Endothelial cell of umbilical vein (primary cell): ENCODE measurements at regions of chr6 and their contacts with region 1.

Region 1: DNA sequence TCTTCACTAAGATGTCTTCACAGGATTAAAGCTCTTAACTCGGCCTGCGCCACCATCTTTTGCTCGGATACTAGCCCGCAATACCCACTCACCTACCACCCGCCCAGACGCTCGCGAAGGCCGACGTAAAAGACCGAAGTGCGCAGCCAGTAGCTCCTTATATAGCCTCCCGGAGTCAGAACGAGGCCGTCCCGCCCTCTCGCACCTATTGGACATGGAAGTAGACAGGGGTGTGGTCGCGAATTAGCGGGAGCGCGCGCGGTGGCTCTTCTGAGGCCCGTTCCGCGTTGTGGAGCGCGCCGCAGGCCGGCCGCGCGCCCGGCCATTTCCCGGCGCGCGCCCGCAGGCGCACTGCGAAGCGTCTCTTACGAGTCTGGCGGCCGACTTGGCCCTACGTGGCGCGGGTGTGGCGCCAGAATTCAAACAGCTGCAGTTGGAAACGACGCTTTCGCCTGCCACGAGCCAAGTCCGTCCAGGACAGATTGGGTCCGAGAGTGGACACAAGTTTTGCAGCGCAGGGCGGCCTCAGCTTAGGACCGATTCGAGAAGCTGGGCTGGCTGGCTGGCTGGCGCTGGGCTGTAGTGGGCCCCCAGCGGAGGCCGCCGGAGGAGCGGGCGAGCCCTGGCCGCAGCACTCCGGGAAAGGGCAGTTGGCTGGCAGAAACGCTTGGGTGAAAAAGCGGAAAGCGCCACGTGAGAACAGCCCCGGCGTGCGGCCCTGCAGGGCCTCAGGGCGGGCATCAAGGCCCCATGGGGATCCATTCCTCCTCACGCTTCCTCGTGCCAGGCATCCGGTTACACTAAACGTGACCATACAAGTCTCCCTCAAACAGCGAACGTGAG is 36.1 kb upstream of the SYNCRIP start:
- DNase-seq: peak; percentile 99
- H3K4me3 ChIP-seq: peak overlapping the region; percentile 87 to 99 (median 96)
- H3K27ac ChIP-seq: peak overlapping the region; percentile 72
- H3K4me1 ChIP-seq: peaks cover 29% of the 10 kb centered on the region
- H3K27me3 ChIP-seq: no peaks in the 10 kb centered on the region
- CTCF ChIP-seq: peak in 1 of 2 donors; percentile 9
- POLR2A ChIP-seq: peak; percentile 100

Region 2: GRCh38 chr6:85354761-85355618 is 323.8 kb before region 1 on chr6:
- CTCF ChIA-PET with region 1: no interaction called
- POLR2A ChIA-PET with region 1: interaction called, 4 read pairs
- dilution Hi-C with region 1: no loop called
- intact Hi-C with region 1: loop called (anchors 5 kb)
- DNase-seq: peak; percentile 78
- H3K4me3 ChIP-seq: no peak overlapping the region
- H3K27ac ChIP-seq: no peak overlapping the region
- H3K4me1 ChIP-seq: no peaks in the 10 kb centered on the region
- H3K27me3 ChIP-seq: no peaks in the 10 kb centered on the region
- CTCF ChIP-seq: peak; percentile 80 to 92
- POLR2A ChIP-seq: no peak

Region 3: GRCh38 chr6:85460921-85461797 is 217.7 kb before region 1 on chr6:
- CTCF ChIA-PET with region 1: no interaction called
- POLR2A ChIA-PET with region 1: interaction called, 6 read pairs
- dilution Hi-C with region 1: no loop called
- intact Hi-C with region 1: loop called (anchors 5 kb)
- DNase-seq: peak; percentile 61
- H3K4me3 ChIP-seq: peak overlapping the region in 1 of 3 experiments; percentile 8
- H3K27ac ChIP-seq: peak overlapping the region; percentile 100
- H3K4me1 ChIP-seq: peaks cover 90% of the 10 kb centered on the region
- H3K27me3 ChIP-seq: no peaks in the 10 kb centered on the region
- CTCF ChIP-seq: no peak
- POLR2A ChIP-seq: no peak

Region 4: DNA sequence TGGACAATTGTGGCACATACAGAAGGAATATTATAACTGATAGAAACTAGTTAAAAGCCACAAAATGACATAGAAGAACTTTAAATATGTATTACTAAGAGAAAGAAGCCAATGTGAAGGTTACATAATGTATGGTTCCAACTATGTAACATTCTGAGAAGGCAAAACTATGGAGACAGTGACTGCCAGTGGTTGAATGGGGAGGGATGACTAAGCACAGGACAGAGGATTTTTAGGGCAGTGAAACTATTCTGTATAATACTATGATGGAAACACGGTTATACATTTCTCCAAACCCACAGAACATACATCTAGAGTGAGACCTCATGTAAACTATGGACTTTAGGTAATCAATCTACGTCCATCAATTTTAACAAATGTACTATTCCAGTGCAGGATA is 58.5 kb before region 1 on chr6:
- CTCF ChIA-PET with region 1: interaction called, 3 read pairs
- POLR2A ChIA-PET with region 1: interaction called, 12 read pairs
- dilution Hi-C with region 1: no loop called
- intact Hi-C with region 1: loop called (anchors 10 kb)
- DNase-seq: no peak
- H3K4me3 ChIP-seq: no peak overlapping the region
- H3K27ac ChIP-seq: no peak overlapping the region
- H3K4me1 ChIP-seq: no peaks in the 10 kb centered on the region
- H3K27me3 ChIP-seq: no peaks in the 10 kb centered on the region
- CTCF ChIP-seq: no peak
- POLR2A ChIP-seq: no peak

Region 5: DNA sequence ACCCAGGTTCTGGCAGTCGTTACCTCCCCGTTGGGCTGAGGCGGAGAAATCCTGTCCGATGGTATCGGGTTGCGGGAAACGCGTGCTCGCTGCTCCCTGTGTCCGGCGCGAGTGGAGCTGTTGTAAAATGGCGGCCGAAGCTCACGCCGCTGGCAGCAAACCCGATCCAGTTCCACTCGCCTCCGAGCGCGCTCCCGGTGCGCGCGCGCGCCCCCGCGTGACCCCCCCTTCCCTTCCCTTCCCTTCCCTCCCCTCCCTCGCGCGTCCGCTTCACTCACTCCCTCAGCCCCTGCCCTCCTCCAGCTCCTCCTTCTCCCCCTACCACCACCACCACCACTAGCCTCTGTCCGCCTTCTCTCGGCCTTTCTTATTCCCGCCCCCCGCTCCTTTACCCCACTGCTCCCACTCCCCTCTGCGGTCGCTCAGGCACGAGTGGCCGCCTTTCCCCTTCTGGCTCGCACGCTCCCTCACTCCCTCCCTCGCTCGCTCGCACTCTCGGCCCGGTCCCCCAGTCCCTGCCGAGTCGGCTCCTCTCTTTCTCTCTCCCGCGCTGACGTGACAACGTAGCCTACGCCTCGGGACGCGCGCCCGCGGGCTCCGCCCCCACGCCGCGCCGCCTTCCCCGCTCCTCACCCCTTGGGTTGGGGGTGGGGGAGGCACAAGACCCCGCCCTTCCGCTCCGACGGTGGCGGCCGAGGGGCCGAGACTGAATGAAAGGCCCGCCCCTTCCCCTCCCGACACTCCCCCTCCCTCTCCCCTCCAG is 35.9 kb before region 1 on chr6 and contains the start of gene SYNCRIP:
- CTCF ChIA-PET with region 1: interaction called, 78 read pairs
- POLR2A ChIA-PET with region 1: interaction called, 372 read pairs
- dilution Hi-C with region 1: no loop called
- intact Hi-C with region 1: loop called (anchors 1 kb)
- DNase-seq: peak; percentile 99
- H3K4me3 ChIP-seq: peak within 1 kb of the TSS; percentile 87 to 91 (median 90)
- H3K27ac ChIP-seq: peak within 1 kb of the TSS; percentile 100
- H3K4me1 ChIP-seq: peaks cover 27% of the 10 kb centered on the region
- H3K27me3 ChIP-seq: no peaks in the 10 kb centered on the region
- CTCF ChIP-seq: no peak
- POLR2A ChIP-seq: peak; percentile 97
- total RNA-seq, gene SYNCRIP: 150 and 155 TPM in 2 replicates

Region 6: DNA sequence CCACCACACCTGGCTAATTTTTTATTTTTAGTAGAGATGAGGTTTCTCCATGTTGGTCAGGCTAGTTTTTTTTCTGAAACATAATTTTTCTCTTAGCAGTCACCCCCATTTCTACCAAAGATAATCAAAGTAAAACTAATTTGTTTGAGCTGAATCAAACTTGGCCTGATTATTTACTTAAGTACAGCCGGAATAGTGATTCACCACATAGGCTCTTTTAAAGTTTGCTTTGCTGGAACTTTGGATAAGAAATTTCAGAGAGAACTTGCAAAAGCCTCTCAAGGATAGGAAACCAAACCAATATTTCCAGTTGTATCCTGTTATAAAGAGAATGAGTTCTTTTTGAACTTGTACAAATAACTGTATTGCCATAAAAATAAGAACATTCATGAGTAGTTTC is 68.8 kb after region 1 on chr6:
- CTCF ChIA-PET with region 1: no interaction called
- POLR2A ChIA-PET with region 1: no interaction called
- dilution Hi-C with region 1: no loop called
- intact Hi-C with region 1: no loop called
- DNase-seq: peak; percentile 15
- H3K4me3 ChIP-seq: no peak overlapping the region
- H3K27ac ChIP-seq: no peak overlapping the region
- H3K4me1 ChIP-seq: no peaks in the 10 kb centered on the region
- H3K27me3 ChIP-seq: no peaks in the 10 kb centered on the region
- CTCF ChIP-seq: no peak
- POLR2A ChIP-seq: no peak

Region 7: GRCh38 chr6:85865420-85866369 is 186.9 kb after region 1 on chr6:
- CTCF ChIA-PET with region 1: no interaction called
- POLR2A ChIA-PET with region 1: interaction called, 4 read pairs
- dilution Hi-C with region 1: no loop called
- intact Hi-C with region 1: loop called (anchors 10 kb)
- DNase-seq: peak; percentile 85
- H3K4me3 ChIP-seq: peak overlapping the region; percentile 33 to 73 (median 72)
- H3K27ac ChIP-seq: peak overlapping the region; percentile 83
- H3K4me1 ChIP-seq: peaks cover 23% of the 10 kb centered on the region
- H3K27me3 ChIP-seq: no peaks in the 10 kb centered on the region
- CTCF ChIP-seq: no peak
- POLR2A ChIP-seq: no peak